Activated CD4-positive, alpha-beta T cell treated with anti-CD3 and anti-CD28 coated beads, Interleukin-2, amount 10 ng/mL, durations not matched to agents 7 days and 5 days (primary cell): ENCODE measurements at regions of chr14 and their contacts with region 1.

Region 1: GRCh38 chr14:104826189-104826860 is 25.4 kb downstream of the ZBTB42 start:
- DNase-seq: peak; percentile 93
- H3K4me3 Mint-ChIP-seq: peak overlapping the region; percentile 70
- H3K27ac Mint-ChIP-seq: no peak overlapping the region
- H3K4me1 Mint-ChIP-seq: peaks cover 23% of the 10 kb centered on the region
- H3K27me3 Mint-ChIP-seq: peaks cover 26% of the 10 kb centered on the region

Region 2: DNA sequence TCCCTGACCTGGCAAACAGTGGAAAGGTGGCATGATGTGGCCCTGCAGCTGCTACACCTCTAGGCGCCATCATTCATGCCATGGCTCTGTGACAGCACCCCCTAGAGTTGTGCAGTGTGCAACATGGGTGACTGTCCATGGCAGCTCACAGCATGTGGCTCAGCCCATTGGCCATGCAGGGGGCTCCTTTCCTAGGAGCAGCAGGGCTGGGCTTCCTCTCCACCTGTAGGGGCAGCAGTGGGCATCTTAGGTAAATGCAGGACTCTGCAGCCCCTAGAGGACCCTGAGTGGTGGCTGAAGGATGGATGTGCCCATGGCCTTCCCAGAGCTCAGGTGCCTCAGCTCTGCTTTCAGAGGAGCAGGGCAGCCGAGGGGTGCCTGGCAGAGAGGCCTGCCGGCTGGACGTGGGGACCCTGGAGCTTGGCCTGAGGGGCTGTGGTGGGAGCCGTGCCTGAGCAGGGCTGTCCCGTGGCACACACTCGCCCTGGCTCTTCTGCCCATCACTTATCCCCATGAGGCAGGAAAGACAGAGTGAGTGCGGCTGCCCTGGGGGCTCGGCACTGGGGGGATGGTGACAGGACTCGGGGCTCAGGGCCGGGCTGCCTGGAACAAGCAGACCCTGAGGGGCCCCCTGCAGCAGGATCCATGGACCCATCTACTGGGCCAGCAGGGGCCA is 94.9 kb before region 1 on chr14:
- CTCF ChIA-PET with region 1: no interaction called
- POLR2A ChIA-PET with region 1: no interaction called
- DNase-seq: no peak
- H3K4me3 Mint-ChIP-seq: no peak overlapping the region
- H3K27ac Mint-ChIP-seq: no peak overlapping the region
- H3K4me1 Mint-ChIP-seq: no peaks in the 10 kb centered on the region
- H3K27me3 Mint-ChIP-seq: no peaks in the 10 kb centered on the region

Region 3: DNA sequence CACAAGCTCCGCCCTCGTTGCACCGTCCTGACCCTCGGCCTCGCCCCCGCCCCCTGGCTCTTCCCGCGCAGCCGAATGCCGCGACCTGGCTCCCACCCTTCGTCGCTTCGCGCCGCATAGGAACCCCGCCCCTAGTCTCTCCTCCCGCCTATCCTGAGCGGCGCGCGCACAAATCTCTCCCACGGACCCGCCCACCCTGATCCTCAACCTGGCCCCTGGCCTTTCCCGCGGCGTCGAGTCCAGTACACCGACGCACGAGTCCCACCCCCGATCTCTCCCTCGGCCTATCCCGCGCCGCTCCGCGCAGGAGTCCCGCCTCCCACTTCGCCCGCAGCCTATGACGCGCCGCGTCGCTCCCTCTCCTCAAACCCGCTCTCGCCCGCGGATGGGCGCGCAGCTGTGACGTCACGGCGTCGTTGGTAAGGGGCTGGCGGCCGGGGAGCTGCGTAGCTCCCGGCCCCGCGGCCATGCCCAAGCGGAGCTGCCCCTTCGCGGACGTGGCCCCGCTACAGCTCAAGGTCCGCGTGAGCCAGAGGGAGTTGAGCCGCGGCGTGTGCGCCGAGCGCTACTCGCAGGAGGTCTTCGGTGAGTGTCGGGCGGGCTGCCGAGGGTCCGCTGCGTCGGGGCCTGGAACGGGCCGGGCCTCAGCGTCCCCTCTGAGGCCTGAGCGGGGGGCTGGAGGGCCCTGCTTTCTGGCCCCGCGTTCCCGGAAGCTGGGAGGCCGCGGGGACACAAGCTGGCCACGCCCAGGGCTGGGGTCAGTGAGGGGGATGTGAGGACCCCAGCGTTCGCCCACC is 73.4 kb before region 1 on chr14 and contains the start of gene SIVA1:
- CTCF ChIA-PET with region 1: interaction called, 10 read pairs
- POLR2A ChIA-PET with region 1: interaction called, 3 read pairs
- DNase-seq: peak; percentile 100
- H3K4me3 Mint-ChIP-seq: peak within 1 kb of the TSS; percentile 85
- H3K27ac Mint-ChIP-seq: peak within 1 kb of the TSS; percentile 95
- H3K4me1 Mint-ChIP-seq: peaks cover 54% of the 10 kb centered on the region
- H3K27me3 Mint-ChIP-seq: no peaks in the 10 kb centered on the region
- total RNA-seq, gene SIVA1: 84.7 to 135 TPM

Region 4: DNA sequence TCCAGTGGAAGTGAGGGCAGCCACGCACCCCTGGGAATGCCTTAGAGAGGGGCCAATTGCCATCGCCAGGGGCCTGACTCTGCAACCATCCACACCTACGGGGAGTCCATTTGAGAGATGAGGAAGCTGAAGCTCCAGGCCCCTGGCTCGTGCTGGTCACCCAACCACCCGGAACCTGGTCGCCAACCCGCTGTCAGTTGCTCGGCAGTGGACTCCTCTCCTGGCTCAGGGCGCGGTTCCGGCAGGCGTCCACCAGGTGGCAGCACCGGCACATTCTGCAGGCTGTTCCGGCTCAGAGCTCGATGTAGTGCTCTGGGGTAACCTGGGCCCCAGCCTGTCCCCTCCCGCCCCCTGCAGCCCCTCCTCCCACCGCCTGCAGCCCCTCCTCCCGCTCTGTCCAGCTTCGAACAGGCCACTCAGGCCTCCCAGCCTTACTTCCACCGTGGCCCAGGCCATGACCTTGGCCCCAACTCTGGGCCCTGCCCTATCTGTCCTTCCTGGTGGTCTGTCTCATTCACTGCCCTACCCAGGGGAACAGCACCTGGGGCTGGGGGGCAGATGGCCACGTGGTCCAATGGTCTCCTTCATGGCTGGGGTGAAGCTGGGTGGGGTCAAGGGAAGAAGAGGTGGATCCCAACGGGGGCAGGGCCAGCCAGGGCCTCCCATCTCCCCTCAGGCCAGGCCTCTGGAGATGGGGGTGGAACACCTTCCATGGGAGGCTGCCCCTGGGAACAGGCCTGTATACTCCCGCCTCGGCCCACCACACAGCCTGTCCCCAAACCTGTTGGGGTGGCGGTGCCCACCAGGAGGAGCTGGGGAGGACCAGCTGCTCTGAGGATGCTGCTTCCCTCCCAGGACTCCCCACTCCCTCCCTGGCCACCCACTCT is 57.6 kb before region 1 on chr14:
- CTCF ChIA-PET with region 1: interaction called, 26 read pairs
- POLR2A ChIA-PET with region 1: no interaction called
- DNase-seq: peak; percentile 92
- H3K4me3 Mint-ChIP-seq: no peak overlapping the region
- H3K27ac Mint-ChIP-seq: no peak overlapping the region
- H3K4me1 Mint-ChIP-seq: peaks cover 13% of the 10 kb centered on the region
- H3K27me3 Mint-ChIP-seq: no peaks in the 10 kb centered on the region

Region 5: DNA sequence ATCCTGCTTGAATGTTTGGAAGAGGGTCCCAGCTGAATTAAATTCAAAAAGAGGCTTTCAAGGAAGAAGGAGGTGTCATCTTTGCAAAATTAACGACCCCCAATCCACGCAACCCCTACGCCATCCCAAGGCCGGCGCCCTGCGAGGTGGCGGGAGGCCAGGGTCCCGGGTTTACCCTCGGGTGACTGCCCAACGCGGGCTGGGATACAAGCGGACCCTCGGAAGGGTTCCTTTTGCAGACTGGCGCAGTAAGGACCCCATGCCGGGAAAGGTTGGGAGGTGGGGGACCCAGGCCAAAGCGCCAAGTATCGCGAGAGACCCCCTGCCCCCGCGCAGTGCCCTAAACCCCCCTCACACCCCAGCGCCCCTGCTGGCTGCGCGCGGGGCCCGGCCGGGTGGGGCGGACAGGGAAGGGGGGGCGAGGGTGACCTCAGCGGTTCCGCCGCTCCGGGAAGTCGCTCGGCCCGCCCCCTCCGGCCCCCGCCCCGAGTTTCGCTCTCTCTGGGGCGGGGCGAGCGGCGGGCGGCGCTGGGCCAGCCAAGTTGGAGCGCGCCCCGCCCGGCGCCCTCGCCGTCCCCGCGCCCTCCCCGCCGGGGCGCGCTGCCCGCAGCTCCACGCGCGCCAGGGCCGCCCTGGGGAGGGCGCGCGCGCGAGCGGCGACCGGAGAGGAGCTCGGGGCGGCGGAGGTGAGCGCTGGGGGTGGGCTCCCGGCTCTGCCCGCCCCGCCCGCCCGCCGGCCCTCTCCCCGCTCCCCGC is 26.1 kb before region 1 on chr14:
- CTCF ChIA-PET with region 1: interaction called, 14 read pairs
- POLR2A ChIA-PET with region 1: no interaction called
- DNase-seq: peak; percentile 82
- H3K4me3 Mint-ChIP-seq: peak overlapping the region; percentile 59
- H3K27ac Mint-ChIP-seq: peak overlapping the region; percentile 63
- H3K4me1 Mint-ChIP-seq: peaks cover 40% of the 10 kb centered on the region
- H3K27me3 Mint-ChIP-seq: peaks cover 6% of the 10 kb centered on the region